RWPE1 (cell line): ENCODE measurements at regions of chr1 and their contacts with region 1.

Region 1: DNA sequence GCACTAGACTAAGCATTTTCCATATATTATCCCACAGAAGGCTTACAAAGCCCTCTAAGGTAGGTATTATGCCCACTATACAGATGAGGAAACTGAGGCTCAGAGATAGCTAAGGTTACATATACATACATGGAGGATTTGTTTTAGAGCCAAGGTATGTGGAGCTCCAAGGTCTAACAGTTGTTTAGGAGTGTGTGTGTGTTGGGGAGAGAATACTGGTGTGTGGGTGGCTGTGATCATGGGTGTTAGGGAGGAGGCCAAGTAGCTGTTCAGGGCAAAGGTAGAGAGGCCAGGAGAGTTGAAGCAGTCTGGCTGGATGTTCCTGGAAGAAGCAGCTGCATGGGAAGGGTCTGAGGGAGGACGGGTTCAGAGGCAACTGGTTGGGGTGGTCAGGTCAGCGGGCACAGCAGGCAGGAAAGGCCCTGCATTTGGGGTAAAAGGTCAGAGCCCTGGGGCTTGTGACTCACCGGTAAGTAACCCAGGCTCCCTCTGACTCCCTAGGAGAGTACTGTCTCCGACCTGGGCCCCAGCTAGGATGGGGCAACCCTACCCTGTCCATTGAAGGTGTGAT is 5.1 kb upstream of the LDLRAP1 start:
- DNase-seq: peak; percentile 69
- H3K27ac ChIP-seq: no peak overlapping the region
- CTCF ChIP-seq: no peak

Region 2: DNA sequence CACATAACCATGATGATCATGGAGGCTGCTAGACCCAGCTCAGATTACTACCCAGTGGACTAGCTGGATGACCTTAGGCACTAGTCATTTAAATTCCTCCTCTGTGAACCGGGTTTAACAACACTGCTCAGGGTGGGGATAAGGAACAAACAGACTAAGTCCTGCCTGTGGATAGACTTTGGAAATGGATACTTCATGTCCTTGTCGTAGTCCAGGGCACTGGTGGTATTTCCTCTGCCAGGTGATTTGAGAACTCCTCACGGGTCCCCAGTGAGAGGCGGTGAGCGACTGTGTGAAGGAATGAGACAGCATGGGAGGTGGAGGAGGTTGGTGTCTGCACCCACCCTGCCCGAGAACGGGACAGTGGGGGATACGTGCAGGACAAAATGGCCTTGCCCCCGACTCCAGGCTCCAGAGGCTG is 188.8 kb after region 1 on chr1:
- CTCF ChIA-PET with region 1: no interaction called
- POLR2A ChIA-PET with region 1: no interaction called
- DNase-seq: no peak
- H3K27ac ChIP-seq: no peak overlapping the region
- CTCF ChIP-seq: no peak

Region 3: DNA sequence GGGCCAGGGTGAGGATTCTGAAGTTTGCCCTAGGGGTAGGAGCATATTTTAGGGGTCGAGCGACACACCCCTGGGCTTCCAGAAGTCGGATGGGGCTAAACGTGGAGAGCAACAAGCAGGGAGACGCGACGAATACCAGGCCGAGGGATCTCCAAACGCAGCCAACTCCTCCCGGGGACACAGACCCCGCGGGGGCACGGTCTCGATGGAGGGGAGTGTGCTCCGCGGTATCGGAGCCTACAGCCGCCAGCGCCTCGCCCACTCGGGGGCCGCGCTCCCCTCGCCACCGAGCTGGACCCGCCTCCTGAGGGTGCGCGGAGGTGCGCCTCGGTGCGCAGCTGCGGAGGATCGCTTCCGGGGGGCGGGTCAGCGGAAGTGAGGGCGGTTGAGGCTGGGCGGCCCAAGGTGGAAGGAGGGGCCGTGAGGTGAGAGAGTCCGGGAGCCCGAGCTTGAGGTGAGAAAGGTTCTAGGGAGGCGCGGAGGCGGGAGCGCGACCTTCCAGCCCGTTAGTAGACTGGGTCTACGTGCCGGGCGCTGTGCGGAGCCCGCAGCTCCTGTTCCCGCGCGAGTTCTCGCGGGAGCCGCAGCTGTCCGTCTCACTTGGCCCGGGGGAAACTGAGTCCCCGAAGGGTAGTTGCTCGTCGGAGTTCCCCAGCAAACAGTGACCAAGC is 281.4 kb after region 1 on chr1 and contains the start of gene MTFR1L:
- CTCF ChIA-PET with region 1: no interaction called
- POLR2A ChIA-PET with region 1: interaction called, 10 read pairs
- DNase-seq: peak; percentile 92
- H3K27ac ChIP-seq: peak within 1 kb of the TSS; percentile 92
- CTCF ChIP-seq: no peak